ENCODE measurements at regions of chr11 and their contacts with region 1.

Region 1: GRCh38 chr11:19735157-19735908 is 22.7 kb downstream of the NAV2 start:
- DNase-seq: no peak
- ATAC-seq: no peak
- H3K4me3 ChIP-seq: no peak overlapping the region
- H3K27ac ChIP-seq: no peak overlapping the region
- H3K4me1 ChIP-seq: no peaks in the 10 kb centered on the region
- H3K27me3 ChIP-seq: no peaks in the 10 kb centered on the region
- CTCF ChIP-seq: no peak
- POLR2A ChIP-seq: no peak
- RAD21 ChIP-seq: peak; percentile 32; the same call in 1 of the 2 replicates

Region 2: DNA sequence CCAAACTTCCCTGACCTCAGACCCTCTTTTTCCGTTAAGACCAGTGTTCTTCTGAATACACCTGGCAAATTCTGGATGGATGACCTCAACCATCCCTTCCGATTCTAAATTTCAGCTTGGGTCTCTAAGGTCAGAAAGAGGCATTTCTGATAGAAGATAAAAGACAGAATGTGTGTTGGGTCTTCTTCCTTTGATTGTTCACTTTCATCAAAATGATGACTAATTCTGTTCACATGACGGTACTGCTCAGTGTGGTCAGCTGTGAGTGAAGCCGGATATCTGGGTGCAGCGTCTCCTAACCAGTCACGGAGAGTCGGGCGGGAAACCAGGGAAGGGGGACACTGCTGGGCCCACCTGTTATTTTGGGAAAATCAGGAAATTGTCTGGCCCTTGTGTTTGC is 174.3 kb before region 1 on chr11:
- CTCF ChIA-PET with region 1: interaction called, 14 read pairs
- POLR2A ChIA-PET with region 1: no interaction called
- RAD21 ChIA-PET with region 1: interaction called in 1 of 2 experiments, 4 read pairs
- intact Hi-C with region 1: no loop called
- DNase-seq: no peak
- ATAC-seq: no peak
- H3K4me3 ChIP-seq: no peak overlapping the region
- H3K27ac ChIP-seq: no peak overlapping the region
- H3K4me1 ChIP-seq: peaks cover 0 to 6% of the 10 kb centered on the region in 2 experiments; a peak in 1 of 4 replicates
- H3K27me3 ChIP-seq: peaks cover 13% of the 10 kb centered on the region; the same call in 1 of the 2 replicates
- CTCF ChIP-seq: no peak
- POLR2A ChIP-seq: no peak
- RAD21 ChIP-seq: no peak

Measured in HCT116 (cell line).